Sciatic nerve (tissue), 2 donors: ENCODE measurements at regions of chr19 and their contacts with region 1.

Region 1: DNA sequence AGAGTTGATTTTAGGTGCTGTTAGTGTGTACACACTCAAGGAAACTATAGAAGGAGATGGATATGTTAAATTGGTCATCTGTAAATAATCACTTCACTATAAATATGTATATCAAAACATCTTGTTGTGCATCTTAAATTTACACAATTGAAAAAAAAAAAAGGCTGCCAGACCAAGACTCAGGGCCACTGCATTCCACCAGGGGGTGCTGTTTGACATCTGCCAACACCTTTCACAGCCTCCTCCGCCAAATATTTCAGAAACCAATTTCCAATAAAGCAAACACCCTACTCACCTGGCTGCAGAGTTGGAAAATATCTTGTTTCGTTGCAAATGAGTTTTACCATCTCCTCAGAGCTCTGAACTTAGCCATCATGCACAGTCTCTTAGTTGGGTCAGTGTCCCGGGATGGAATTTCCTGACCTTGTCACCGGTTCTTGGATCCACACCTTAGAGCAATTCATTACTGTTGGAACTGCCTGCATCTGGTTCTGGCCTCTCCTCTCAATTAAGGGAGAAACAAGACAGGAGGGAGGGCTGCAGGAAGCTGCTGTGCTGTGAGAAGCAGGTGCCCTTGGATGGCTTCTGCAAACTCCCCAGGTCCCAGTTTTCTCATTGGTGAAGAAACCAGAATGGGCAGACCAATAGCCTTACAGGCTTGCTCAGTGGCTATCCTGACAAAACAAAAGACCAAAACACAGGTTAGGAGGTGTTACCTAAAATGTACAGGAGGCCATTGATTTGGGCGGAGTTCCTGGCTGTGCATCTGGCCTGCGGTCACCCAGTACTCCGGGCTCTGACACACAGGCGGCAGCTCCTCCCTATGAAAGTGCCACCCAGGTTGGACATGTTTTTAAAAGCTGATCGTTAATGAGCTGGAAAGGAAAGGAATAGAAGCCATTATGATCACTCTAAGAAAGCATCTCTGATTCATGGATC is 746.6 kb downstream of the UQCRFS1 start:
- DNase-seq: peak; percentile 80
- ATAC-seq: no peak

Region 2: GRCh38 chr19:28396287-28396831 is 70.0 kb before region 1 on chr19:
- intact Hi-C with region 1: no loop called
- DNase-seq: no peak
- ATAC-seq: no peak

Region 3: DNA sequence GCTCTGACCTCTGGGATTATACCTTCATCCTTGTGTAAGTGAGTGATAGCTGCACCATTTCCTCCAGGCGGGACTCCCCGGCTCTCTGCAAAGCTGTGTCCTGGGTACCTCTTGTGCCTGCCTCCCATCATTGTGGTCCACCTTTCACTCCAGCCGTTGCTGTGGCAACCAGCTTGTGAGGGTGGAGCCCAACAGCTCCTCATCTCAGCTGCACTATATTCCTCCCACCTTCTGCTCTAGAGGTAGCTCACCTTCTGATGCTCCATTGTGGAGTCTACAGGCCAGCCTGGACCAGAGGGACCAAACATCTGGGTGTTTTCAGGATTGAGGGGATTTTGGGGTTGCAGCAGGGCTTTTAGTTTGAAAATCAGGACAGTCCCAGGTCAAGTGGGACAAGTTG is 38.4 kb after region 1 on chr19:
- intact Hi-C with region 1: no loop called
- DNase-seq: no peak
- ATAC-seq: no peak

Region 4: GRCh38 chr19:28705008-28705407 is 238.6 kb after region 1 on chr19:
- intact Hi-C with region 1: loop called (anchors 10 kb)
- DNase-seq: no peak
- ATAC-seq: no peak